Left lung (tissue), 14 donors: ENCODE measurements at regions of chr5 and their contacts with region 1.

Region 1: DNA sequence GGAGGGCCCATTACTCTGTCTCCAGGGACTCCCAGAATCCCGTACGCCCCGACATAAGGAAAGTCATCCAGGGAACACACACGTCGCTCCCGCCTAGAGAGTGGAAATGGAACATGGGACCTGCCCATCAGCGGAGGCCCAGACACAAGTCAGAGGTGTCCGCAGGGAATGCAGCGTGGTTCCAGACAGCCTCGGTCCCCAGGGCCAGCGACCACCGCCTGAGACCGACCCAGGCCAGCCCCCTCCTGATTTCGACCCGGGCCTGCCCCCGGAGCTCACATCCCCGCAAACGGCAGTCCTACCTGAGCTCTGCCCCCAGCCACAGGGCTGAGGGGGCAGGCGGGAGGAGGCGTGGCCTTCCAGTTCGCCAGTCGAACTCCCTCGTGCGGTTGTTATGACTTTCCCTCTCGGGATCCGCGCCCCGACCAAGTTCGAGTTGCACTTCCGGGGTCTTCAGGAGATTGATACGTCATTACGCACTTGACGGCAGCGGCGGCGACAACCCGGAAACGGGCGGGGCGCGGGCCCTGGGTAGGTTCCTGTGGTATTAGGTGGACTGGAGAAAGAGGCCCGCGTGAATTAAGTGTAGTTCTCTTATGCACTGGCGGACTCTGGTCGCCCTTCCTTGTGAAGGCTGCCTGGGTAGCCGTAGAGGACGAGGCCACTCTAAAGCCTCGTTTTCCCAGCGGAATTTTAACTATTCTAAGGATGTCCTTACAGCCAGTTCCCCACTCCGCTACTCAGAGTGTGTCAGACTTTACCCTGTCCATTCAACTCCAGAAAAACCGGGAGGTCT is 370.0 kb upstream of the POU5F2 start:
- DNase-seq: peak; percentile 88 to 98 (median 96)
- ATAC-seq: peak; percentile 98
- H3K4me3 ChIP-seq: peak overlapping the region; percentile 73 to 90
- H3K27ac ChIP-seq: peak overlapping the region; percentile 78 to 91
- H3K4me1 ChIP-seq: peaks cover 3 to 11% of the 10 kb centered on the region in 2 donors
- H3K27me3 ChIP-seq: no peaks in the 10 kb centered on the region
- CTCF ChIP-seq: no peak

Region 2: DNA sequence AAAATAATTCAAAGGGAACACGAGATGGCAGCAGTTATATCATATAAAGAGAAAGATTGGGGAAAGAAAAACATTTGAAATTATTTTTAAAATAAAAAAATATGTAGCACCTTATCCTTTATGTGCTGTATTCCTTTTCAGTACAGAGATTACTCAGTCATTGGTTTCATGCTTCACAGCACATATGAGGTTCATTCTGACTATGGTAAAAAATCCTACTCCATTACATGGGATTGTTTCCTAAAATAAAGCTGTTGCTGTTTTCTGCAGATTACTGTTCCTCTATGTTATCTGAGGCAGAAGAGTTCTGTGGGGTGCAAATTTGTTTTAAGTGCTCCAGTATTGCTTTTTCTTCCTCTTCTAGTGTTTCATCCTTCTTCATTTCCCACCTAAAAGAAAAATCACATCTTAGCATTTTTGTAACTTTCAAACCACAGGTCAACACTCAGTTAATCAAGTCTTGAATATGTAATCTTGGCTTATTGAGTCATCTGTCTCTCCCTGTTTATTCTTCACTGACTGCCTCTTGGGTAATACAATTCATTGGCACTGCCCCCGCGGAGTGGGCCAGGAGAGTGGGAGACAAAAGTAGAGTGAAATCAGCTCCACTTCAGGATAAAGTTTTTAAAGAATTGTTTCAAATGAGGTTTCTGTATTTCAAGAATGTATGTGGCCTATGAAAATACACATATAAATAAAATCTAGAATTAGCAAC is 42.5 kb after region 1 on chr5:
- intact Hi-C with region 1: no loop called
- DNase-seq: peak in 2 of 4 donors; percentile 31 to 35
- ATAC-seq: peak; percentile 81
- H3K4me3 ChIP-seq: no peak overlapping the region
- H3K27ac ChIP-seq: no peak overlapping the region
- H3K4me1 ChIP-seq: peaks cover 0 to 6% of the 10 kb centered on the region in 2 donors
- H3K27me3 ChIP-seq: no peaks in the 10 kb centered on the region
- CTCF ChIP-seq: no peak

Region 3: DNA sequence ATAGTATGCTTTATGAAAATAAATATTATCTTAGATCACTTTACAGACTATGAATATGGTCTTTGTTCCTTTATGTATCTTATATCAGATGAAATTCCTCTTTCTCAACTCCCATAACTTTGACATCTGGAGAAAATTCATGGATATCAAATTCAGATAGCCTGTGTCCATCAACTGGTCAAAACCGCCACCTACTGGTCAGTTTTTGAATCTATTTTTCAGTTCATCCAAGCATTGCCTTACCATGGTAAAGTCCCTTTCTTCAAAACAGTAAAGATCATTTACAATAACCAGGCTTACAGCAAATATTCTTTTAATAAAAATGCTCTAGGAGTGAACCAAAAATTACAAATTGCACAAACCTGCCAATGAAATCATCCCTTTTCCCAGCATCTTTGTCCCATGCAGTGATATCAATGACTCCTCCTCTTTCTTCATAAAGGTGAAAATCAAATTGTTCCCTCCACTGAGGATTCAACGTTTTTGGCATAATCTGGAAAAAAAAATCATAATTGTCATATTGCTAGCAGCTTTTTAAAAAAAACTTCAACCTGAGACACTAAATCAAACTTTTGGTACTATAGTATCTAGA is 797.6 kb after region 1 on chr5:
- intact Hi-C with region 1: loop called in 1 of 2 experiments (anchors 10 kb)
- DNase-seq: peak in 2 of 4 donors; percentile 16 to 38
- ATAC-seq: peak; percentile 41
- H3K4me3 ChIP-seq: no peak overlapping the region
- H3K27ac ChIP-seq: no peak overlapping the region
- H3K4me1 ChIP-seq: no peaks in the 10 kb centered on the region
- H3K27me3 ChIP-seq: no peaks in the 10 kb centered on the region
- CTCF ChIP-seq: peak; percentile 46 to 51